ENCODE measurements at regions of chr2 and their contacts with region 1.

Region 1: GRCh38 chr2:238270606-238271005 is 17.8 kb downstream of the PER2 start:
- DNase-seq: peak; percentile 46
- H3K4me3 ChIP-seq: no peak overlapping the region
- H3K27ac ChIP-seq: no peak overlapping the region
- H3K4me1 ChIP-seq: peaks cover 0 to 3% of the 10 kb centered on the region in 2 experiments; a peak in 1 of 4 replicates
- H3K27me3 ChIP-seq: no peaks in the 10 kb centered on the region
- CTCF ChIP-seq: no peak
- EP300 ChIP-seq: no peak
- RAD21 ChIP-seq: no peak

Region 2: GRCh38 chr2:238835726-238836301 is 565.2 kb after region 1 on chr2:
- CTCF ChIA-PET with region 1: no interaction called
- POLR2A ChIA-PET with region 1: interaction called, 11 read pairs
- DNase-seq: no peak
- H3K4me3 ChIP-seq: no peak overlapping the region
- H3K27ac ChIP-seq: no peak overlapping the region
- H3K4me1 ChIP-seq: no peaks in the 10 kb centered on the region; a peak in 1 of 4 replicates
- H3K27me3 ChIP-seq: no peaks in the 10 kb centered on the region
- CTCF ChIP-seq: peak; percentile 26; the same call in 1 of the 2 replicates
- EP300 ChIP-seq: no peak
- RAD21 ChIP-seq: no peak

Measured in SK-N-SH (cell line).